ENCODE measurements at regions of chr7 and their contacts with region 1.

Region 1: GRCh38 chr7:143965280-143965679 is 10.6 kb downstream of the OR2F1 start:
- DNase-seq: no peak
- ATAC-seq: no peak
- H3K4me3 ChIP-seq: no peak overlapping the region
- H3K27ac ChIP-seq: no peak overlapping the region
- H3K4me1 ChIP-seq: no peaks in the 10 kb centered on the region
- H3K27me3 ChIP-seq: no peaks in the 10 kb centered on the region
- CTCF ChIP-seq: no peak

Region 2: GRCh38 chr7:143934526-143935325 is 30.6 kb before region 1 on chr7 and contains the start of gene OR2F2:
- intact Hi-C with region 1: loop called in 1 of 10 experiments (anchors 5 kb)
- DNase-seq: no peak
- ATAC-seq: no peak
- H3K4me3 ChIP-seq: no peak within 1 kb of the TSS
- H3K27ac ChIP-seq: no peak within 1 kb of the TSS
- H3K4me1 ChIP-seq: no peaks in the 10 kb centered on the region
- H3K27me3 ChIP-seq: no peaks in the 10 kb centered on the region
- CTCF ChIP-seq: no peak
- total RNA-seq, gene OR2F2: not detected